Cardiac septum (tissue), 1 donor: ENCODE measurements at regions of chr11 and their contacts with region 1.

Region 1: GRCh38 chr11:104120493-104121137 is 43.3 kb downstream of the PDGFD start:
- DNase-seq: no peak

Region 2: DNA sequence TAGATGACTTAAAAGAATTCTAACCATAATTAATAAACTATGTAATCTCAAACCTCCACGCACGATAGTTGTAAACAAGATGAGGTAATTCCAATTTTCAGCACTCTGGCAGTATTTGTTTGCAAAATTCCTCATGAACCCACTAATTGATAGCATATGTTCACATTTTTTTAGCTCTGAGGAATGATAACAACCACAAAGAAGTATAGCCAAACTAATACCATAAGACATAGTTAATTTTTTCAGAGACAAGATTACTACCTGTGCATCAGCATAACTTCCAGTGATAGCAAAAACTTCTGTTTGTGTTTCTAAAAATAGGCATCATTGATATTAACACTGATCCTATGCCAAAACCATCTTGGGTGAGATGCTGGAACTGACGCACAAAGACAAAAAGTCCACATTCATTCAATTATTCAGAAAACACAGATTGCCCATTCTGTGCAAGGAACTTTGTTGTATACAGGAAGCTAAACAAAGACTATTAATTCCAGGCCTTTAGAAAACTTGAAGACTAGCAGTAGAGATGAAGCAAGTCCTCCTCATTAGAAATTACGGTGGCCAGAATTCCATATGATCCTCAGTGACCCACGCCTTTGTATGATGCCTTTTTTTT is 14.4 kb before region 1 on chr11:
- intact Hi-C with region 1: loop called (anchors 2 kb)
- DNase-seq: no peak